ENCODE measurements at regions of chr10 and their contacts with region 1.

Region 1: GRCh38 chr10:119445311-119445934 is 97.1 kb downstream of the RGS10 start:
- DNase-seq: peak; percentile 73 to 98 (median 90)

Region 2: GRCh38 chr10:119199231-119199992 is 246.0 kb before region 1 on chr10:
- intact Hi-C with region 1: loop called (anchors 2 kb)
- DNase-seq: peak in 9 of 10 donors; percentile 40 to 94 (median 64)

Region 3: GRCh38 chr10:119207367-119207668 is 238.1 kb before region 1 on chr10 and contains the start of gene GRK5:
- intact Hi-C with region 1: loop called (anchors 2 kb)
- DNase-seq: peak; percentile 88 to 99 (median 92)

Region 4: DNA sequence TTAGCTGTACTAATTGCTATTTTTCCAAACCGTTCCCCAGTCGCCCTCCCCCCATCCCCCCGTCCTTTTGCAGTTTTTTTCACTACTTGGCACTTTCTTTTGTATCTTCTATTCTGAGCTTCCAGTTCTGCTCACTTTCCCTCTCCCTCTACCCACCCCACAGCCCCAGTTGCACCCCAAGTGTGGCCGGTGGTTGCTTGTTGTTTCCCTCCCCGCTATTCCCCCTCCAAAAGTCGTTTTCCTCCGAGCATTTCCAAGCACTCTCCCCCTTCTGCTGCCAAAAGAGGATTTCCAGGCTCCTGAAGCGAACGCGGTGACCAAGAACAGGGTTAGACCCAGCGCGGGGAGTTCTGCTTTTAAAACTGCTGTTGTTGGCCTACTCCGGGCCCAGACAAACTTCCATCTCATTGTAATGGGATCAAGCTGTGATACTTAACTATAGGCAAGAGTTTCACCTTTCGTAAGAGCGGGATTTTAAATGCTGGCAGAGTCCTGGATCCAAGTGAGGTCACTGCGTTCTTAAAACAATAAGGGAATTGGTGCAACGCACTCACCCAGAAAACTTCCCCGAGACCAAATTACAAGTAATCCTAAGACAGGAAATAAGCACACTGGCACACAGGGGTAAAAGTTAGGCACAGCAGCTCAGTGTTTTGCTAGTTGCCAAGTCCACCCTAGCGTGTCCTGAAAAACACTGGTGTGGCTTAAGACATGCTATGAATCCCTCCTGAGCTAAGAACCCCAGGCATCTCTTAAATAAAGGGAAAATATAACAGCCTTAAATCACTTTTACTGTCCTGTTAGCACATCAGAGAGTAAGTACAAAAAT is 98.6 kb after region 1 on chr10:
- intact Hi-C with region 1: no loop called
- DNase-seq: no peak